Activated CD8-positive, alpha-beta T cell treated with anti-CD3 and anti-CD28 coated beads, Interleukin-2, amount 10 ng/mL, durations not matched to agents 7 days and 5 days (primary cell): ENCODE measurements at regions of chr19 and their contacts with region 1.

Region 1: GRCh38 chr19:11096210-11096841 is 7.1 kb downstream of the LDLR start:
- DNase-seq: peak; percentile 47
- ATAC-seq: peak; percentile 21
- H3K4me3 Mint-ChIP-seq: peak overlapping the region; percentile 49
- H3K27ac Mint-ChIP-seq: peak overlapping the region; percentile 86
- H3K4me1 Mint-ChIP-seq: peaks cover 65% of the 10 kb centered on the region
- H3K27me3 Mint-ChIP-seq: no peaks in the 10 kb centered on the region

Region 2: GRCh38 chr19:11035441-11036377 is 60.6 kb before region 1 on chr19:
- CTCF ChIA-PET with region 1: interaction called, 23 read pairs
- POLR2A ChIA-PET with region 1: interaction called, 9 read pairs
- DNase-seq: peak; percentile 91
- ATAC-seq: peak; percentile 98
- H3K4me3 Mint-ChIP-seq: no peak overlapping the region
- H3K27ac Mint-ChIP-seq: peak overlapping the region; percentile 39
- H3K4me1 Mint-ChIP-seq: peaks cover 8% of the 10 kb centered on the region
- H3K27me3 Mint-ChIP-seq: no peaks in the 10 kb centered on the region

Region 3: DNA sequence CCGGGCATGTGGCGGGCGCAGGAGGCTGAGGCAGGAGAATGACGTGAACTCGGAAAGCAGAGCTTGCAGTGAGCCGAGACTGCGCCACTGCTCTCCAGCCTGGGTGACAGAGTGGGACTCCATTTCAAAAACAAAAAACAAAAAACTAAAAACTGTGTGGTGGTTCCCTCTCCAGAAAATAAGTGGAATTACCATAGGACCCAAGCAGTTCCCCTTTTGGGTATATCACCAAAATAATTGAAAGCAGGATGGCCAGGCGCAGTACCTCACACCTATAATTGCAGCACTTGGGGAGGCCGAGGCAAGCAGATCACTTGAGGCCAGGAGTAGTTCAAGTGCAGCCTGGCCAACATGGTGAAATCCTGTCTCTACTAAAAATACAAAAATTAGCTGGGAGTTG is 22.8 kb before region 1 on chr19:
- CTCF ChIA-PET with region 1: no interaction called
- POLR2A ChIA-PET with region 1: no interaction called
- DNase-seq: no peak
- ATAC-seq: no peak
- H3K4me3 Mint-ChIP-seq: no peak overlapping the region
- H3K27ac Mint-ChIP-seq: no peak overlapping the region
- H3K4me1 Mint-ChIP-seq: peaks cover 10% of the 10 kb centered on the region
- H3K27me3 Mint-ChIP-seq: no peaks in the 10 kb centered on the region

Region 4: DNA sequence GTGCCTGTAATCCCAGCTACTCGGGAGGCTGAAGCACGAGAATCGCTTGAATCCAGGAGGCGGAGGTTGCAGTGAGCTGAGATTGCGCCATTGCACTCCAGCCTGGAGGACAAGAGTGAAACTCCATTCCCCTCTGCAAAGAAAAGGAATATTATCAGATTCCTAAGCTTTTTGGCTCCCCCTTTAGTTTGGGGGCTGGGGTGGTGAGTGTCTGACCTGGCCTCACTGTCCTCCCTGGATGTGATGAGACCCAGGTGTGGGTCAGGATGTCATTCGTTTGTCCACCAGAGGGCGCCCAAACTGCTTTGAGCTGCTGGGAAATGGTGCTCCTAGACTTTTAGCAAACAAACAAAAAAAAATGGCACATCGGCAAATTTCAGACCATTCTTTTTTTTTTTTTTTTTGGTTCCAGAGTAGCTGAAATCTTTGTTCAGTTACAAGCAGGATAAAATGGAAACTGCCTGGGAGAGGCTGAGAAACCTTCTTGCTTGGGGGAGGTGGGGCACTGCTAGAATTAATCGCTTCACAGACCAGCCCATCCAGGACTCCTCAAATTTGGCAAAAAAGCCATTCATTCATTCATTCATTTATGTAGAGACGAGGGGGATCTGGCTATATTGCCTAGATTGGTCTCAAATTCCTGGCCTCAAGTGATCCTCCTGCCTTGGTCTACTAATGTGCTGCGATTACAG is 29.8 kb after region 1 on chr19:
- CTCF ChIA-PET with region 1: interaction called, 20 read pairs
- POLR2A ChIA-PET with region 1: interaction called, 5 read pairs
- DNase-seq: peak; percentile 82
- ATAC-seq: peak; percentile 63
- H3K4me3 Mint-ChIP-seq: no peak overlapping the region
- H3K27ac Mint-ChIP-seq: no peak overlapping the region
- H3K4me1 Mint-ChIP-seq: peaks cover 2% of the 10 kb centered on the region
- H3K27me3 Mint-ChIP-seq: no peaks in the 10 kb centered on the region